Activated CD4-positive, alpha-beta T cell treated with anti-CD3 and anti-CD28 coated beads, Interleukin-2, amount 10 ng/mL, durations not matched to agents 24 days and 14 days (primary cell): ENCODE measurements at regions of chr21 and their contacts with region 1.

Region 1: GRCh38 chr21:33199516-33200217 is 30.1 kb upstream of the IFNAR2 start:
- DNase-seq: peak; percentile 93
- H3K4me3 Mint-ChIP-seq: no peak overlapping the region
- H3K27ac Mint-ChIP-seq: no peak overlapping the region
- H3K4me1 Mint-ChIP-seq: peaks cover 25% of the 10 kb centered on the region
- H3K27me3 Mint-ChIP-seq: peaks cover 23% of the 10 kb centered on the region

Region 2: DNA sequence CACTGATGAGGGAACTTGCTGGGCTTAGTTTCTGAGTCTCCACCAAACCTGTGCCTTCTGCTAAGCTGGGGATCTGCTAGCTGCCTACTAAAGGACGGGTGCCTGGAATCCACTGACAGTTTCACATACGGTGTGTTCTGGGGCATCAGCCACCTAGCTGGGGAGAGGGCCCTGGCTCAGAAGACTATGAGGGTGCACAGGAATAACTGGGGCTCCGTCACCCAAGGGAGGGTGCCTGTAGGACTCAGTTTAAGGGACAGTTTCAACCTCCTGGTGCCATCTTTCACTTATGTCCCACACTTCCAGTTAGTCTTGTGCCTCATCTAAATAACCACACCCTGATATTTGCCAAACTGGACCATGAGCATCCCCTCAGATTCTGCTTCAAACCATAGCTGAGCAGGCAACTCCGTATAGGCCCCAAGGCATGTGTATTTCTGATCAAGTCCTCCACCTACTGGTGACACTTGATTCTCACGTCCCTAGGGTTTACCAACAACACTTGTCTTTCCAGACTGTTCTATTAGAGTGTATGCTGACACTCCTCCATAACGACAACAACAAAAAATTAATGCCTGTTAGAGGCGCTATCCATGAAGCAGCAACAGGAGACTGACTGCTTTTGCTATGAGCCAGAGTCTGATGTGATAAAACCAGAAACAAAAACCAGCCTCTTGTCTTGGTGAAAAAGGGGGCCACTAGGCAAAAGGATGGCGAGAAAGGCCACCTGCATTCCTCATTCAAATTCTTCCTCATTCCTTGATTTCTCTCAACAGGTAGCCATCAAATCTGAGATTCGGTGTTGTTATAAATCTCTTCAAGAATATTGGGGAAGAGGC is 373.1 kb before region 1 on chr21:
- intact Hi-C with region 1: loop called (anchors 2 kb)
- DNase-seq: peak; percentile 82
- H3K4me3 Mint-ChIP-seq: no peak overlapping the region
- H3K27ac Mint-ChIP-seq: no peak overlapping the region
- H3K4me1 Mint-ChIP-seq: peaks cover 3% of the 10 kb centered on the region
- H3K27me3 Mint-ChIP-seq: peaks cover 20% of the 10 kb centered on the region

Region 3: GRCh38 chr21:33025489-33026442 is 173.9 kb before region 1 on chr21 and contains the start of gene OLIG2:
- intact Hi-C with region 1: loop called (anchors 10 kb)
- DNase-seq: peak; percentile 62
- H3K4me3 Mint-ChIP-seq: peak within 1 kb of the TSS; percentile 28
- H3K27ac Mint-ChIP-seq: peak within 1 kb of the TSS; percentile 71
- H3K4me1 Mint-ChIP-seq: peaks cover 19% of the 10 kb centered on the region
- H3K27me3 Mint-ChIP-seq: peaks cover 79% of the 10 kb centered on the region
- total RNA-seq, gene OLIG2: not detected in 2 replicates

Region 4: GRCh38 chr21:33238565-33239255 is 39.0 kb after region 1 on chr21:
- intact Hi-C with region 1: loop called (anchors 2 kb)
- DNase-seq: no peak
- H3K4me3 Mint-ChIP-seq: peak overlapping the region; percentile 65
- H3K27ac Mint-ChIP-seq: peak overlapping the region; percentile 87
- H3K4me1 Mint-ChIP-seq: peaks cover 56% of the 10 kb centered on the region
- H3K27me3 Mint-ChIP-seq: no peaks in the 10 kb centered on the region

Region 5: DNA sequence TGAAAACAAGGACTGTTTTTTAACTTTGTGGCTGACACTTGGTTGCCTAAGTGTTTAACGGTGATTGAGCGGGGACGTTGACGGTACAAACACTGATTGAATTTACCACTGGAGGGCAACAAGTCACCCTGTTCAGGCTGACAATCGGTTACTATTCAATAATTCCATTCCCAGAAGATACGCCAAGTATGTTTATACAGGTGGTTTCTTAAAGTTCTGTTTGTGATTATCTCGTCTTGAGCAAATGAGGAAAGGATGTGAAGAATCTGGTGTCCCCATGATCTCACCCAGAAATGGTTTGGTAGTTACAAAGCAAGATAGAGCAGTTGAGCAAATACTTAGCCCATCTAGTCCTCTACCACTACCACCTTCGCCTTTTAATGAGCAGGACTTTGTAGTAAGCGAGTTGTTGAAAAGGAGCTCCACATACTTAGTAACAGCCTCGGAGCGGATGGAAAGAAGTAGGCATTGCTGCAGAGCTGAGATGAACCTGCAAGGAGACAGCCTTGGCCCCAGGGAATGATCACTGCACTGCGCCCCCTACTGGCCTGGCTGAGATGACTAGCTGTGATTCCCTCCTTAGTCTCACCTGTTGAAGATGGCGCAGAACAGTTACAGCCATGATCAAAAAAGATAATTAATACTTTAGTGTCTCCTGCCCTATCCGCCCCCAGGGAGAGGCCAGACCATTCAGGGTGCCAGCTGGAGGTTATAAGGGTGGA is 161.4 kb after region 1 on chr21:
- intact Hi-C with region 1: loop called (anchors 1 kb)
- DNase-seq: peak; percentile 94
- H3K4me3 Mint-ChIP-seq: peak overlapping the region; percentile 73
- H3K27ac Mint-ChIP-seq: peak overlapping the region; percentile 10
- H3K4me1 Mint-ChIP-seq: peaks cover 17% of the 10 kb centered on the region
- H3K27me3 Mint-ChIP-seq: no peaks in the 10 kb centered on the region

Region 6: DNA sequence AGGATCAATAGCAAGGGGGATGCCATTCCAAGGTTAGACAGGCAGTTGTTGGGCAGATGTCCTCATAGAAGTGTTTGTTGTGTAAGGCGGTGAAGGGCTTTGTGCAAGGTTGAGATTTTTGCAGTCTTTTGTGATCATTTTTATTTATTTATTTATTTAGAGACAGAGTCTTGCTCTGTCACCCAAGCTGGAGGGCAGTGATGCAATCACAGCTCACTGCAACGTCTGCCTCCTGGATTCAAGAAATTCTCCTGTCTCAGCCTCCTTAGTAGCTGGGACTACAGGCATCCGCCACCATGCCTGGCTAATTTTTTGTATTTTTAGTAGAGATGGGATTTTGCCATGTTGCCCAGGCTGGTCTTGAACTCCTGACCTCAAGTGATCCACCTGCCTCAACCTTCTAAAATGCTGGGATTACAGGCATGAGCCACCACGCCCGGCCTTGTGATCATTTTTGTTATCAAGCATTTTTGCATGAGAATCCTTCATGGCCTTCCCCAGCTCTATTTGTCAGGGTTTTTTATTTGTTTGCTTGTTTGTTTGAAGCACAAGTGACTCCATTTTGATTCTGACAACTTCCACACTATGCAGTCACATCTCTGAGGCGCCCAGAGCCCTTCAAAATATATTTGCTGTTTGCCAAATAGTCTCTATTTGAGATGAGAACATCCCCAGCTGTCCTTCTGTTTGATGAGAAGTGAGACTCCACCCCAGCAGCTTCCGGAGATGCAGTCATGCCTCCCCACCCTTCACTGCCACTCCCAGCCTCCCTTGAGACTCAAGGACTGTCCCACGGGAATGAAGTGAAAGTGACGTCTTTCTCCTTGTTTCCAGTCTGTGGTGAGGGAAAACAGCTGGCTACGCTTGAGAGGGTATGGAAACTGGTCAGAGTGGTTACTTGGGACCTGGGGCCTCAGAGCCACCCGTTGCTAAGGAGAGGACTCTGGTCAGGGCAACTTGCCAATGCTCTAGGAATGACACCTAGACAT is 242.1 kb after region 1 on chr21:
- intact Hi-C with region 1: loop called (anchors 1 kb)
- DNase-seq: no peak
- H3K4me3 Mint-ChIP-seq: no peak overlapping the region
- H3K27ac Mint-ChIP-seq: no peak overlapping the region
- H3K4me1 Mint-ChIP-seq: peaks cover 7% of the 10 kb centered on the region
- H3K27me3 Mint-ChIP-seq: no peaks in the 10 kb centered on the region

Region 7: DNA sequence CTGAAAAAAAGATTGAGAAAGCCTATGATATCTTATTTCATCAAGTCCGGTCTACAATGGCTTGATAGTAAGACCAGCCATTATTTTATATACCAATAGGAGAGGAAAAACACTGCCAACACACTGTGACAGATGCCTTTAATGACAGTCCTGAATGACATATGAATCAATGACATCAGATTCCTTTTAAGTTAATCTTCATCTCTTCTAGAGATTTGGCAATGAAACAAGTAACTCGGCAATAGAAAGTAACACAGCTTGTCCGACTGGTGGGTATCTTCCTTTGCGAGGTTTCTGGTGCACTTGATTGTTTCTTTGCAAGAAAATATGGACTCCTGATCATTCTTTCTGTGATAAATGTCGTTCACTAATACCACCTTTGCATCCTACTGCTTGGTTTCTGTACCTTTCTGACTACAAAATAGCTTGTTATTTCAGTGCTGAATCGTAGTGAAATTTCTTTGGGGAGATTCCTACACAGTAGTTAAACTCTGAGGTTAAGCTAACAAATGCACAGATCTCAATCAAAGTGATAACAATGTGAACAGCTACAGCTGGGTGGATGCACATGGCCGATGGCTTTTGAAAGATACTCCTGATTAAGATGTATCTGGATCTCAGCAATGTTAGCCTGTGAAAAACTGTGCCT is 978.4 kb after region 1 on chr21:
- intact Hi-C with region 1: no loop called
- DNase-seq: no peak
- H3K4me3 Mint-ChIP-seq: no peak overlapping the region
- H3K27ac Mint-ChIP-seq: peak overlapping the region; percentile 9
- H3K4me1 Mint-ChIP-seq: peaks cover 5% of the 10 kb centered on the region
- H3K27me3 Mint-ChIP-seq: peaks cover 2% of the 10 kb centered on the region